ENCODE measurements at regions of chr5 and their contacts with region 1.

Region 1: DNA sequence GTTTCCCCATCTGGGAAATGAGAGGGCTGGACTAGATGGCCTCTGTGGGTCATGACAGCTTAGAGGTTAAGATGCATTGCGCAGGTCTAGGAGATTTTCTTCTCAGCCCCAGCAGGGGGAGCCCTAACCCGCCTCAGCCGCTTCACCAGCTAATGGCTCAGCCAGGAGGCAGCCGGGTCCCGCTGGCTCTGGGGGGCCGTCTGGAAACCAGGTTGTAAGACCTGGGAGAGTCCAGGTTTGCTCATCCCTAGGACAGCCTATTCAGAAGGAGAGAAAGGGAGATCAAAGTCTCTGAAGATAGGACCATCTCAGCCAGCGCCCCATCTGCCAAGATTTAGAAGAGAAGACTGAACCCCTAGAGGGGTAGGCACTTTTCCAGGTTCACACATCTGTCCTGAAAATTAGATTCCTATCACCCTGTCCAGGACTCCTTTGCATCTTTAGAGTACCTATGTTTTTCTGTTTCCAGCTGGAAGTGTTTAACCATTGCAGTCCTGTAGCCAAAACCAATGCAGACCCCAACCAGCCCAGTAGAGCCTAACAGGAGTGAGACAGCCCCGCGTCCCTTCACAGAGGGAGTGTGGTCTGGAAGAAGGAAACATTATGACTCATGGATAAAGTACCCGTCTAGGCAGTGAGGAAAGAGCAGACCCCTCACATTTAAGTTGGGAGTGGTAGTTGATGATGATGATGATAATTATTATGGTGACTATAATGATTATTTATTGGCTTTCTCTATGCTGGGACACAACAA is 27.5 kb downstream of the SPARC start:
- DNase-seq: peak; percentile 72
- CTCF ChIP-seq: peak; percentile 90

Region 2: GRCh38 chr5:151432210-151432609 is 227.0 kb before region 1 on chr5:
- in situ Hi-C with region 1: loop called (anchors 10 kb)
- DNase-seq: no peak
- CTCF ChIP-seq: no peak

Region 3: DNA sequence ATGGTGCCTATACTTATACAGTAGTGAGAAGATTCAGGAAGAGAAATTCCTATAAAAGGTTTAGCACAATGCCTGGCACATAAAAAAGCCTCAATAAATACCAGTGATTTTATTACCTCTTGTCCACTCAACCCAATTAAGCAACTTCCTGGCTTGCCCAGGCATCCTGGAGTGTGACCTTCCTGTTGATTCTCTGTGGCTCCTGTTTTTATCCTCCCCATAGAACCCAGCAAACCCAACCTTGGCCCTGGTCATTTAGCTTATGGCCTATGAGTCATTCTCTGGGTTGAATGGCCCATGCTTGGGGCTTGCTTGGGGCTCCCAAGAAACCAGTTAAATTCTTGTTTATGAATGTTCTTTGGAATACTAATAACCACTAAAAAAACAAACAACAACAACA is 48.9 kb after region 1 on chr5:
- in situ Hi-C with region 1: no loop called
- DNase-seq: no peak
- CTCF ChIP-seq: no peak